ENCODE measurements at regions of chr10 and their contacts with region 1.

Region 1: GRCh38 chr10:96491299-96491698 is 22.4 kb downstream of the TLL2 start:
- DNase-seq: no peak
- ATAC-seq: no peak
- H3K4me3 ChIP-seq: no peak overlapping the region
- H3K27ac ChIP-seq: no peak overlapping the region
- H3K4me1 ChIP-seq: no peaks in the 10 kb centered on the region
- H3K27me3 ChIP-seq: no peaks in the 10 kb centered on the region
- CTCF ChIP-seq: peak in 2 of 3 experiments; percentile 35 to 36; a peak in 3 of 6 replicates
- EP300 ChIP-seq: no peak
- POLR2A ChIP-seq: no peak
- RAD21 ChIP-seq: peak; percentile 52

Region 2: GRCh38 chr10:96319754-96320474 is 171.4 kb before region 1 on chr10:
- CTCF ChIA-PET with region 1: no interaction called
- POLR2A ChIA-PET with region 1: no interaction called
- RAD21 ChIA-PET with region 1: no interaction called
- SMC1A ChIA-PET with region 1: no interaction called
- in situ Hi-C with region 1: no loop called
- intact Hi-C with region 1: no loop called
- DNase-seq: no peak
- ATAC-seq: no peak
- H3K4me3 ChIP-seq: no peak overlapping the region
- H3K27ac ChIP-seq: no peak overlapping the region
- H3K4me1 ChIP-seq: no peaks in the 10 kb centered on the region
- H3K27me3 ChIP-seq: no peaks in the 10 kb centered on the region
- CTCF ChIP-seq: no peak
- EP300 ChIP-seq: no peak
- POLR2A ChIP-seq: no peak
- RAD21 ChIP-seq: no peak

Region 3: DNA sequence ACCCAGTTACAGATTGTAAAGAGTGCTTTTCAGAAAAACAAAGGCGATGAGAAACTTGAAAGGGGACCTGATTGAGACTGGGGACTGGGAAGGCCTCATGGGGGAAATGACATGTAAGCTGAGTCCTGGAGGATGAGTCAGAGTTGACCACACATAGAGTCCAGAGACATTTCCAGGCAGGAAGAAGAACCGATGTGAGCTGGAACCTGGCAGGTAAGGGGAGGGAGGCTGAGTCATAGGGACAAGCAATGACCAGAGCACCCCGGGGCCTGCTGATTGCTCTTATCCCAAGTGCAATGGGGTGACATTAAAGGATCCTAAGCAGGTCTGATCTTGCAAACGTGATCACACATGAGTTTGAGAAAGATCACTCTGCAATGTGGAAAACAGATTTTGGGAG is 10.7 kb after region 1 on chr10:
- CTCF ChIA-PET with region 1: interaction called, 14 read pairs
- POLR2A ChIA-PET with region 1: no interaction called
- RAD21 ChIA-PET with region 1: no interaction called
- SMC1A ChIA-PET with region 1: interaction called, 9 read pairs
- in situ Hi-C with region 1: no loop called
- intact Hi-C with region 1: no loop called
- DNase-seq: no peak
- ATAC-seq: no peak
- H3K4me3 ChIP-seq: no peak overlapping the region
- H3K27ac ChIP-seq: no peak overlapping the region
- H3K4me1 ChIP-seq: peaks cover 4% of the 10 kb centered on the region; the same call in 1 of the 2 replicates
- H3K27me3 ChIP-seq: no peaks in the 10 kb centered on the region; a peak in 1 of 4 replicates
- CTCF ChIP-seq: no peak
- EP300 ChIP-seq: no peak
- POLR2A ChIP-seq: no peak
- RAD21 ChIP-seq: no peak

Measured in GM12878 (cell line).